Activated T-helper 2 cell treated with anti-CD3 and anti-CD28 coated beads, Interferon-gamma antibody, Interleukin-2, Interleukin-4, amounts not matched to agents 10 μg/mL and 5 μg/mL and 100 μg/mL, durations not matched to agents 14 hours and 24 hours and 36 hours (primary cell): ENCODE measurements at regions of chr11 and their contacts with region 1.

Region 1: DNA sequence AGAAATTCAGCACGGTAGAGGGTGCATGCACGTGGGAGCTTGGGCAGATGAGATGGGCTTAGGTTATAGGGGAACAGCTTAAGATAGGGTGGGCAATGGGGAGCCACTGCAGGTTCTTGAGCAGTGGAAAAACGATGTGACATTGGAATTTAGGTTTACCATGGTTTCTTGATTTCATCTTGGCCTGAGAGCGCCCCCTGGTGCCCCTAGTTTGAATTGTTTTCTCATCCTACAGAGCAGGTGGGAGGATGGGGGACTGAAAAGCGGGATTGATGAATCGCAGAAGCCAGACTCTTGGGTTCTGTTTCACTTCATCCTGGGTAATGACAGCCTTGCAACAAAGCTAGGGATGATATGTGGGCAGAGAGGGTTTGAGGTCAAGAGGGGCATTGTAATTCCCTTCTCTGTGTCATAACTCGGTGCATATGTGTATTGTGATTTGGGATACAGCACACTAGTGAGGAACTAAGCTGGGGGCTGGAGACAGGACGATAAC is 6.7 kb upstream of the MCAM start:
- DNase-seq: peak; percentile 65
- H3K4me3 Mint-ChIP-seq: no peak overlapping the region
- H3K27ac Mint-ChIP-seq: no peak overlapping the region
- H3K4me1 Mint-ChIP-seq: peaks cover 16% of the 10 kb centered on the region
- H3K27me3 Mint-ChIP-seq: peaks cover 6% of the 10 kb centered on the region

Region 2: GRCh38 chr11:119334174-119334930 is 10.8 kb after region 1 on chr11 and contains the start of gene RNF26:
- intact Hi-C with region 1: loop called (anchors 2 kb)
- DNase-seq: peak; percentile 93
- H3K4me3 Mint-ChIP-seq: peak within 1 kb of the TSS; percentile 100
- H3K27ac Mint-ChIP-seq: peak within 1 kb of the TSS; percentile 99
- H3K4me1 Mint-ChIP-seq: peaks cover 40% of the 10 kb centered on the region
- H3K27me3 Mint-ChIP-seq: peaks cover 22% of the 10 kb centered on the region
- total RNA-seq, gene RNF26: 29.9 and 32.6 TPM in 2 replicates